Activated naive CD4-positive, alpha-beta T cell treated with anti-CD3 and anti-CD28 coated beads, Interleukin-2, amount 10 ng/mL, durations not matched to agents 7 days and 5 days (primary cell): ENCODE measurements at regions of chr15 and their contacts with region 1.

Region 1: GRCh38 chr15:44066316-44066740 is 128.7 kb downstream of the FRMD5 start:
- DNase-seq: peak; percentile 73
- H3K4me3 Mint-ChIP-seq: no peak overlapping the region
- H3K27ac Mint-ChIP-seq: no peak overlapping the region
- H3K4me1 Mint-ChIP-seq: no peaks in the 10 kb centered on the region
- H3K27me3 Mint-ChIP-seq: peaks cover 12% of the 10 kb centered on the region

Region 2: GRCh38 chr15:43941555-43941954 is 124.8 kb before region 1 on chr15:
- CTCF ChIA-PET with region 1: interaction called, 12 read pairs
- DNase-seq: no peak
- H3K4me3 Mint-ChIP-seq: no peak overlapping the region
- H3K27ac Mint-ChIP-seq: no peak overlapping the region
- H3K4me1 Mint-ChIP-seq: no peaks in the 10 kb centered on the region
- H3K27me3 Mint-ChIP-seq: peaks cover 4% of the 10 kb centered on the region